Common myeloid progenitor, CD34-positive (primary cell): ENCODE measurements at regions of chr4 and their contacts with region 1.

Region 1: DNA sequence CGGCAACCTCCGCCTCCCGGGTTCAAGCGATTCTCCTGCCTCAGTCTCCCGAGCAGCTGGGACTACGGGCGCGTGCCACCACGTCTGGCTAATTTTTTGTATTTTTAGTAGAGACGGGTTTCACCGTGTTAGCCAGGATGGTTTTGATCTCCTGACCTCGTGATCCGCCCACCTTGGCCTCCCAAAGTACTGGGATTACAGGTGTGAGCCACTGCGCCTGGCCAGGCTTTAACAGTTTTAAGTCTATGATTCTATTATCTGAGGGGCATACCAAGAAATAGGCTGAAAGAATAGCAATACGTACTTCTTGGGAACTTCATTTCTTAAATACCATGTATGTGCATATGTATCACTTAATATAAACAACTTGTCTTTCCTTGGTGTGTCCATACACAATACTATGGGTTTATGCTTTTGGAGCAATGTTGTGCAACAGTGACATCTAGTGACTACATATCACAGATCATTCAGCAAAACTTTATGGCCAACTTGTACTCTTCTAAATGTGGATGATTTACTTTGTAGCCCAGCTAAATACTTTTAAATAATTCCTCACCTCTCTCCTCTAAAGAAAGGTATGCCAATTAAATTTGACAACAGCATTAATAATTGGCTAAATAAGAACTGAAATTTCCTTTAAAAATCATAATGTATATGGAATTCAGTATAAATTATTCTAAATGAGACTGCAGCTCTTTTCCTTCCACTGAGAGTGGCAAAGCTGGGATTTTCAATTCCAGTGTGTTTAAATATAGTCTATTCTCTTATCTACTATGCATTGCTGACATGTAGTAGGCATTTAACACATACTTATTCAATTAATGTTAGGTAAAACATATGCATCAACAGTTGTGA is 10.4 kb downstream of the SLC9B1 start:
- DNase-seq: peak; percentile 71 to 89 (median 82)
- H3K4me3 ChIP-seq: no peak overlapping the region
- H3K27ac ChIP-seq: no peak overlapping the region
- H3K4me1 ChIP-seq: no peaks in the 10 kb centered on the region
- H3K27me3 ChIP-seq: no peaks in the 10 kb centered on the region

Region 2: DNA sequence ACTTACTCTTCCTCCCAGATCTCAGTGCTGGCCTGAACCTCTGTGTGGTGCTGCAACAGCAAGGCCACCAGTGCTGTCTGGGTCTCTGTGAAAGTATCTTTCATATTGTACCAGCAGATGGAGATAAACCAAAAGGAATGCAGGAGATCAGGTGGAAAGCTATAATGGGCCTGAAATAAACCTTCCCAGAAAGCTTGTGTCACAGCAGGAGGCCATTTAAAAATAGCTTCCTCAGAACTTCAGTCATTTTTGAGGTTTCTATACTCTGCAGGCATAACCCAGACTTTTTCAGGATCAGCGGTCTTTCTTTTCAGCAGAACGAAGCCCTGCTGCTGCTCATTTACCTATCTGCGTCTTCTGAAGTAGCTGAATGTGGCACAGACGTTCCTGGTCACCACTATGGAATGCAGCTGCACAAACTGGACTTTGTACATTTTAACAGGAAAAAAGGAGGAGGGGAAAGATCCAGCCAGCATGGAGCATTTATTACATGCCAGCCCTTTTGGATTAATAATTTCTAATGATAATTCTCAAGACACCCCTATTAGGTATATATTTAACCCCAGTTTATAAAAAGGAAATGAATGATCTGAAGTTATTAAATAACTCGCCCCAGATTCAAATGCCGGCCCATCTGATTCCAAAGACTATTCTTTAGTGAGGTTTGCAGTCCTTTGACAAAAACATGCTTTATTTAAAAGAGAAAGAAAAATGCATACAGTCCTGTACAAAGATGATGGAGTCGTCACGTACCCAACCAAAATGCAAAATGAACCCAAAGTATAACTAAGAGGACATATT is 388.2 kb before region 1 on chr4:
- CTCF ChIA-PET with region 1: interaction called, 45 read pairs
- POLR2A ChIA-PET with region 1: no interaction called
- DNase-seq: peak; percentile 65 to 77 (median 77)
- H3K4me3 ChIP-seq: no peak overlapping the region
- H3K27ac ChIP-seq: no peak overlapping the region
- H3K4me1 ChIP-seq: peaks cover 0 to 9% (median 5%) of the 10 kb centered on the region in 4 experiments
- H3K27me3 ChIP-seq: no peaks in the 10 kb centered on the region

Region 3: DNA sequence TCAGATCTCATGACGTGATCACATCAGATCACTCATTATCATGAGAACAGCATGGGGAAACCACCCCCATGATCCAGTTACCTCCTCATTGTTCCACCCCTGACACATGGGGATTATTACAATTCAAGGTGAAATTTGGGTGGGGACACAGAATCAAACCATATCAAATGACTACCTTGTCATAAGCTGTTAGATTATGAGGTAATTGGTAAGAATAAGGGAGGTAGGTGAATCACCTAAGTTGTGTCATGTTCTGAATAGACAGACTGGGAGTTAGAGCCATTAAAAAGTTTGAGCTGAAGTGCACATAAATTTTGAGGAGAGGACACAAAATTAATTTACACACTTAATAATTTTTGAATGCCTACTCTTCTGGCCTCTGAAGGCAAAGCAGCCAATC is 14.3 kb before region 1 on chr4:
- CTCF ChIA-PET with region 1: interaction called, 10 read pairs
- POLR2A ChIA-PET with region 1: interaction called, 4 read pairs
- DNase-seq: no peak
- H3K4me3 ChIP-seq: no peak overlapping the region
- H3K27ac ChIP-seq: no peak overlapping the region
- H3K4me1 ChIP-seq: no peaks in the 10 kb centered on the region
- H3K27me3 ChIP-seq: no peaks in the 10 kb centered on the region

Region 4: DNA sequence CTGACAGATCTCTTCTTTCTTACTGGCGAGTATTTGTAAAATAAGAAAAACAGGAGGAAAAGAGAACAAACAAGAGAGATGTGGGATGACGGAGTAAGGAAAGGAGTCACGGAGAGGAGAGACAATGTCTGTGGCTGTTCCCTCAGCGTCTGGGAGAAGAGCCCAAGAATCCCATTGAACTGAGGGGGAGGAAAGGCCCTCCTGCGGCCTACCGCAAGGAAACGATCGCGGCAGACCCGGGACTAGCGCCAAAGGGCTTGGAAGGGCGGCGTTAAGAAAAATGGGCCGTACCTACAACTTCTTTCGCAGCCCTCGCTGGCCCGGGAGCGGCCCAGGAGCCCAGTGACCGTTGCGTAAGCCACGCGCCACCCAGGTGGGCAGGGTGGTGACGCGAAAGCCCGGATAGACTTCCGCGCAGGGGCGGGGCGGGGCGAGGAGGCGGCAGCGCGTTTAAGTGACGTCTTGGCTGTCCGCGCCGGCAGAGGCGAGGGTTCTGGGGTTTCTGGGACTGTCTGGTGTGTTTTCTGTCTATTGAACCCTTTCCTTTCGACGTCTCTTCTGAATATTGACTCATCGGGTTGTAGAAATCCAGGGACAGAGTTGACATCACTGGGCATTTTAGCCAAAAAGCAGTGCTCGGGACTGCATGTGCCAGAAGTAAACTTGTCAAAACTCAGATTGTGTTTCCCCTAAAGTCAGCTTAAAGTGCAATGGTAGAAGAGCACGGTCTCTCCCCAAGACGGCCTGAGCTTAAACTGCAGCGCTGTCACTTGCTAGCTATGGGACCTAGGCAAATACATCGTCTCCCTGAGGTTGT is 10.4 kb after region 1 on chr4 and contains the start of gene SLC9B1:
- CTCF ChIA-PET with region 1: no interaction called
- POLR2A ChIA-PET with region 1: no interaction called
- DNase-seq: peak; percentile 89 to 95 (median 93)
- H3K4me3 ChIP-seq: peak within 1 kb of the TSS; percentile 33 to 95 (median 78)
- H3K27ac ChIP-seq: peak within 1 kb of the TSS; percentile 64 to 86
- H3K4me1 ChIP-seq: peaks cover 6 to 20% (median 15%) of the 10 kb centered on the region in 4 experiments
- H3K27me3 ChIP-seq: peaks cover 0 to 23% (median 7%) of the 10 kb centered on the region in 5 experiments